SK-N-SH (cell line): ENCODE measurements at regions of chr11 and their contacts with region 1.

Region 1: GRCh38 chr11:65711785-65712632 is at the start of gene KAT5:
- DNase-seq: peak; percentile 95
- H3K4me3 ChIP-seq: peak within 1 kb of the TSS; percentile 62 to 72
- H3K27ac ChIP-seq: peak within 1 kb of the TSS; percentile 96 to 98
- H3K4me1 ChIP-seq: peaks cover 6 to 8% of the 10 kb centered on the region in 2 experiments; a peak in 1 of 4 replicates
- H3K27me3 ChIP-seq: no peaks in the 10 kb centered on the region
- CTCF ChIP-seq: peak; percentile 95
- EP300 ChIP-seq: peak in 1 of 2 experiments; percentile 34; a peak in 1 of 4 replicates
- RAD21 ChIP-seq: peak; percentile 96
- polyA plus RNA-seq, gene KAT5: 44.5 and 51.9 TPM in 2 replicates

Region 2: DNA sequence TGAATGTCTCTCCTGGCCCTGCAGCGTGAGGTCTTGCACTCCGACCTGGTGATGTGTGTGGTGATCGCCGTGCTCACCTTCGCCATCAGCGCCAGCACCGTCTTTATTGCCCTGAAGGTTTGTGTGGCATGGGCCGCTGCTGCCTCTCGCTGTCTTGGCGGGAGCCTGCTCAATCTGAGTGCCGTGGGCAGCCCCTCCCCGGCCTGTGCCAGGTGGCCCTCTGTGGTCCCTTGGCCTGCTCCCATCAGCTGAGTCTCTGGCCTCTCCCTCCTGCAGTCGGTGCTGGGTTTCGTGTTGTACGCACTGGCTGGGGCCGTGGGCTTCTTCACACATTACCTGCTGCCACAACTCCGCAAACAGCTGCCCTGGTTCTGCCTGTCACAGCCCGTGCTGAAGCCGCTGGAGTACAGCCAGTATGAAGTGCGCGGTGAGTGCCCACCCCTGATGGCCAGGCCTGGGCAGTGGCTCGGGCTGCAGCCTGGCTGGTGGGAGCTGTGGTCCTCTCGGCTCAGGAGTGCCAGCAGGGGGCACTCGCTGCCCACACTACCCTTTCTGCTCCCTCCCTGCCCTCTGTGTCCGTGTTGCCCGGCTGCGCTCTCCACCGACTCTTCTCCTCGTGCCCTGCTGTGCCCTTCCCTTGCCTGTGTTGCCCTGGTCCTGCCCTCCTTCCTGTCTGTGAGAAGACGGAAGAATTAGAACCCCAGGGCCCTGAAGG is 86.2 kb before region 1 on chr11:
- CTCF ChIA-PET with region 1: interaction called, 10 read pairs
- POLR2A ChIA-PET with region 1: interaction called, 3 read pairs
- DNase-seq: peak; percentile 89
- H3K4me3 ChIP-seq: no peak overlapping the region
- H3K27ac ChIP-seq: no peak overlapping the region
- H3K4me1 ChIP-seq: no peaks in the 10 kb centered on the region
- H3K27me3 ChIP-seq: no peaks in the 10 kb centered on the region
- CTCF ChIP-seq: peak; percentile 54
- EP300 ChIP-seq: no peak
- RAD21 ChIP-seq: peak; percentile 69

Region 3: GRCh38 chr11:65773784-65774411 is 61.9 kb after region 1 on chr11:
- CTCF ChIA-PET with region 1: interaction called, 46 read pairs
- POLR2A ChIA-PET with region 1: no interaction called
- DNase-seq: no peak
- H3K4me3 ChIP-seq: no peak overlapping the region
- H3K27ac ChIP-seq: no peak overlapping the region
- H3K4me1 ChIP-seq: no peaks in the 10 kb centered on the region
- H3K27me3 ChIP-seq: no peaks in the 10 kb centered on the region
- CTCF ChIP-seq: no peak
- EP300 ChIP-seq: no peak
- RAD21 ChIP-seq: no peak

Region 4: DNA sequence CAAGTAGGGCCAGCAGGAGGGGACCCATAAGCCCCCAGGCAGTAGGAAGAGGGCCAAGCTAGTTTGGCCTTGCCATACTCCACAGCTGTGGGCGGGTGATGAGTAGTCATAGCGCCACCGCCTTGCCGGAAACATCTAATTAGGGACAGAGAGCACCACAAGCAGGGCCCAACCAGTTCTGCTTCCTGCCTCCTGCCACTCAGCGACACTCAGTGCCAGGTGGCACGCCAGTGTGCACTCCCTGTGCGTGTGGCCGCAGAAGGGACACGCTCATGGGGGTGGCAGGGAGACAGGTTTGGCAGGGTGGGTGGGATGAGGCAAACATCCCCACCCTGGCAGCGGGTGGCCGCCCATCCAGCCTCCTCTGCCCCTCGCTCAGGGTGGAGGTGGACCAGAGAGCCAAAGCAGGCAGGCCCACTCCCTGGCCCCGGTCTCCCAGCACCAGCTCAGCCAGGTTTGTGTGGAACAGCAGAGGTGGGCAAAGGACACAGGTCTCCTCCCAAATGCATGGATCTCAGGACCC is 79.7 kb after region 1 on chr11:
- CTCF ChIA-PET with region 1: interaction called, 19 read pairs
- POLR2A ChIA-PET with region 1: no interaction called
- DNase-seq: peak; percentile 33
- H3K4me3 ChIP-seq: no peak overlapping the region
- H3K27ac ChIP-seq: no peak overlapping the region
- H3K4me1 ChIP-seq: no peaks in the 10 kb centered on the region; a peak in 1 of 4 replicates
- H3K27me3 ChIP-seq: peaks cover 27% of the 10 kb centered on the region
- CTCF ChIP-seq: no peak
- EP300 ChIP-seq: no peak
- RAD21 ChIP-seq: no peak

Region 5: DNA sequence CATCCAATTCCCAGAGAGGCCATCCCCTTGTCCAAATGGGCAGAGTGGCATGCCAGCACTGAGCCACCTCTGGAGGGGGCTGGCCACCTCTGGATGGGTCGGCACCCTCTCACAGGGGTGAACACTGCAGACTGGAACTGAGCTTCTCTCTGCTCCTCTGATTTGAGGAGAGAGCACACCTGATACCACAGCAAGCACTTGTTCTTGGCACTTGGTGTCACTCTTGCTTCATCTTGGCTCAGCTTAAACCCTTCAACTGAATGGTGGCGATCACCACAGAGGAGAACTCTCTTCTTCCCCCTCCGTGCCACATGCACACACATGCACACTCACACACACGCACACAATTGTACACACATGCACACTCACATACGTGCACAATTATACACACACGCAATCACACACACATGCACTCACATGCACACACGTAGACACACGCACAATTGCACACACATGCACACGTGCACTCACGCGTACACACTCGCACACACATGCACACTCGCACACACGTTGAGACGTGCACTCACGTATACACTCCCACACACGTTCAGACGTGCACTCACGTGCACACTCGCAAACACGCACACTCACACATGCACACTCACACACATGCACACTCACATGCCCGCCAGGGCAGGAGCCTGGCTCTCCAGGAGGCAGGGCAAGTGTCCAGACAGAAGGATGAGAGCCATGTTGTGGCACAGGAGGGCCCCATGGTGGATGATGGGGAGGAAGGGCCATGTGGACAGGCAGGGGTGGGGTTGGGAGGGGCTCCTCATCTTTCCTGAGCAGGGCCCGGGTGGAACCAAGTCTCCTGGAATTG is 98.2 kb after region 1 on chr11:
- CTCF ChIA-PET with region 1: interaction called, 111 read pairs
- POLR2A ChIA-PET with region 1: interaction called, 3 read pairs
- DNase-seq: no peak
- H3K4me3 ChIP-seq: no peak overlapping the region
- H3K27ac ChIP-seq: no peak overlapping the region
- H3K4me1 ChIP-seq: no peaks in the 10 kb centered on the region
- H3K27me3 ChIP-seq: peaks cover 29% of the 10 kb centered on the region; the same call in 1 of the 2 replicates
- CTCF ChIP-seq: no peak
- EP300 ChIP-seq: no peak
- RAD21 ChIP-seq: no peak

Region 6: DNA sequence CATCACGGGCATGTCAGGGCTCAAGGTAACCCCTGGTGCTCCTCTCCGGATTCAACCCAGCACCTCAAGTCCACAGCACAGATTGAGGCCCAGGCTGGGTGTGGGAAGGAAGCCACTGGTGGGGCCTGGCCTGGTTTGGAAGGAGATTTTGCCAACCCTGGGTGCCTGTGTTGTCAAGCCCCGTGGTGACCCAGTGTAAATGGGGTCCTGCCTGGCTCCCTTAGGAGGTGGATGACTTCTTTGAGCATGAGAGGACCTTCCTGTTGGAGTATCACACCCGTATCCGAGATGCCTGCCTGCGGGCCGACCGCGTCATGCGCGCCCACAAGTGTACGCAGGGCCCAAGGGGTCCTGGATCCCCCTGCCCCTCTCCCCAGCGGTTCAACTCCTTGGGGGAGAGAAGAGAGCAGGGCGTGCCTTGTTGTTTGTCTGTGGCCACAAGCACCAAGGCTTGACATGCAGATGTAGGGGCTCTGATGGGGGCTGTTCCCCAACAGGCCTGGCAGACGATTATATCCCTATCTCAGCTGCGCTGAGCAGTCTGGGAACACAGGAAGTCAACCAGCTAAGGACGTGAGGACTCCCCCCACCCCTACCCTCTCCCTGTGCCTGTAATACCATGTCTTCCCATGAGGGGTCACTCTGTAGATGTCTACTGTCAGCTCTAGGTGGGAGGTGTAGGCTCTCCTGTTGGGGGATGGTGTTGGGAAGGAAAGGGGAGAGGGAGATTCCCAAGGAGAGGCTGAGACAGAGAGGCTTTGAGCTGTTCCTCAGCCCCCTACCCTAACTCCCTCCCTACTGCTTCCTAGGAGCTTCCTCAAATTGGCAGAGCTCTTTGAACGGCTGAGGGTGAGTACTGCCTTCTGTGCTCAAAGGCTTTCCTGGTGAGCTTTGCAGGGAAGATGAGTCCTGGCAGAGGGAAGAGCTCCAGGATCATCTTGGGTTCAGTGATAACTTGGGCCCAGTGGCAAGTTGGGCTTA is 139.1 kb after region 1 on chr11:
- CTCF ChIA-PET with region 1: interaction called, 12 read pairs
- POLR2A ChIA-PET with region 1: interaction called, 5 read pairs
- DNase-seq: peak; percentile 76
- H3K4me3 ChIP-seq: no peak overlapping the region
- H3K27ac ChIP-seq: no peak overlapping the region
- H3K4me1 ChIP-seq: peaks cover 0 to 16% of the 10 kb centered on the region in 2 experiments; a peak in 2 of 4 replicates
- H3K27me3 ChIP-seq: no peaks in the 10 kb centered on the region
- CTCF ChIP-seq: peak; percentile 61
- EP300 ChIP-seq: no peak
- RAD21 ChIP-seq: no peak

Region 7: GRCh38 chr11:65988791-65989592 is 277.0 kb after region 1 on chr11:
- CTCF ChIA-PET with region 1: interaction called, 15 read pairs
- POLR2A ChIA-PET with region 1: no interaction called
- DNase-seq: peak; percentile 85
- H3K4me3 ChIP-seq: peak overlapping the region in 1 of 2 experiments; percentile 4; a peak in 1 of 4 replicates
- H3K27ac ChIP-seq: peak overlapping the region; percentile 17 to 18; a peak in 2 of 4 replicates
- H3K4me1 ChIP-seq: peaks cover 0 to 2% of the 10 kb centered on the region in 2 experiments; a peak in 1 of 4 replicates
- H3K27me3 ChIP-seq: no peaks in the 10 kb centered on the region
- CTCF ChIP-seq: peak; percentile 100
- EP300 ChIP-seq: no peak
- RAD21 ChIP-seq: peak; percentile 97